ENCODE measurements at regions of chr22 and their contacts with region 1.

Region 1: GRCh38 chr22:37394341-37394740 is 32.9 kb downstream of the ELFN2 start:
- DNase-seq: no peak
- ATAC-seq: no peak
- H3K4me3 ChIP-seq: no peak overlapping the region
- H3K4me3 Mint-ChIP-seq: no peak overlapping the region
- H3K27ac ChIP-seq: no peak overlapping the region
- H3K27ac Mint-ChIP-seq: no peak overlapping the region
- H3K4me1 ChIP-seq: no peaks in the 10 kb centered on the region
- H3K4me1 Mint-ChIP-seq: no peaks in the 10 kb centered on the region
- H3K27me3 ChIP-seq: no peaks in the 10 kb centered on the region
- H3K27me3 Mint-ChIP-seq: peaks cover 9% of the 10 kb centered on the region
- CTCF ChIP-seq: no peak

Region 2: GRCh38 chr22:37357446-37358075 is 36.8 kb before region 1 on chr22:
- CTCF ChIA-PET with region 1: no interaction called
- POLR2A ChIA-PET with region 1: no interaction called
- intact Hi-C with region 1: loop called in 1 of 2 experiments (anchors 5 kb)
- DNase-seq: no peak
- ATAC-seq: no peak
- H3K4me3 ChIP-seq: no peak overlapping the region
- H3K4me3 Mint-ChIP-seq: no peak overlapping the region
- H3K27ac ChIP-seq: no peak overlapping the region
- H3K27ac Mint-ChIP-seq: no peak overlapping the region
- H3K4me1 ChIP-seq: no peaks in the 10 kb centered on the region
- H3K4me1 Mint-ChIP-seq: peaks cover 5% of the 10 kb centered on the region
- H3K27me3 ChIP-seq: no peaks in the 10 kb centered on the region
- H3K27me3 Mint-ChIP-seq: no peaks in the 10 kb centered on the region
- CTCF ChIP-seq: no peak

Measured in CD8-positive, alpha-beta T cell (primary cell).